PC-9 (cell line): ENCODE measurements at regions of chr15 and their contacts with region 1.

Region 1: GRCh38 chr15:50633653-50634052 is 52.9 kb downstream of the TRPM7 start:
- DNase-seq: no peak
- H3K4me3 ChIP-seq: no peak overlapping the region
- H3K27ac ChIP-seq: no peak overlapping the region
- H3K4me1 ChIP-seq: no peaks in the 10 kb centered on the region
- H3K27me3 ChIP-seq: no peaks in the 10 kb centered on the region
- CTCF ChIP-seq: no peak

Region 2: GRCh38 chr15:50576166-50576565 is 57.5 kb before region 1 on chr15:
- CTCF ChIA-PET with region 1: no interaction called
- POLR2A ChIA-PET with region 1: no interaction called
- intact Hi-C with region 1: loop called (anchors 10 kb)
- DNase-seq: no peak
- H3K4me3 ChIP-seq: no peak overlapping the region
- H3K27ac ChIP-seq: no peak overlapping the region
- H3K4me1 ChIP-seq: no peaks in the 10 kb centered on the region
- H3K27me3 ChIP-seq: no peaks in the 10 kb centered on the region
- CTCF ChIP-seq: no peak

Region 3: GRCh38 chr15:50675536-50676144 is 42.0 kb after region 1 on chr15:
- CTCF ChIA-PET with region 1: no interaction called
- POLR2A ChIA-PET with region 1: no interaction called
- intact Hi-C with region 1: no loop called
- DNase-seq: no peak
- H3K4me3 ChIP-seq: no peak overlapping the region
- H3K27ac ChIP-seq: no peak overlapping the region; the same call in 1 of the 2 replicates
- H3K4me1 ChIP-seq: no peaks in the 10 kb centered on the region
- H3K27me3 ChIP-seq: no peaks in the 10 kb centered on the region
- CTCF ChIP-seq: peak; percentile 84

Region 4: DNA sequence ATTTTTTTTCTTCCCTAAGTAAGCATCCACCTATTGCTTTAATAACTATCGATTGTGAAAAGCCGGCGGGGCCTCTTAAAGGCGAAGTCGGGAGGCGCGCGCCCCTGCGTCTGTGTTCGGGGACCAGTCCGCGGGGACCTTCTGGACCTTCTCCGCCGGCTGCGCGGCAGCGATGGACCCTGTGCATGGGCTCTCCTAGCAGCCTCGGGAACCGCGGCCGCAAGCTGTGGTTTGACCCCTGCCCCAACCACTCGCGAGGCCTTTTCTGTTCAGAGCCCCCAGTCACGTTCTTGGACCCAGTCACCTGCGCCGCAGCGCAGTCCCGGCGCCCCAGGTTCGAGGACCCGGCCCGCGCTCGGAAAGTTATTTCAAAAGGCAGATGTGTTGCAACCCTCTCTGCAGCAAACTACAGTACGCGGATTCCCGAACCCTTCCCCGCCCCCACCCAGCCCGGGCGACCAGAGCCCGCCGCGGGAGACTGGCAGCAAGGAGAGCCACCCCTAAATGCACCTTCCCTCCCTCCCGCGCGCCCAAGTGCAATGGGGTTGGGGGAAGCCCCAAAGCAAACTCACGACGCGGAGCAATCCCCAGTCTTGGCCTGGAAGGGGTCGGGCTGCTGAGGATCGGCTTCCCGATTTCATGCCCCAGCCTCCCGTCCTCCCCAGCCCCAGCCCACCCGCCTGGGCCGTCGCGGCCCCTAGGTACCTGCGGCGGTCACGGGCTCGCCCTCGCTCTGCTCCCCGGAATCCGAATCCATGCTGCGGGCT is 460.4 kb after region 1 on chr15:
- CTCF ChIA-PET with region 1: no interaction called
- POLR2A ChIA-PET with region 1: no interaction called
- intact Hi-C with region 1: no loop called
- DNase-seq: no peak
- H3K4me3 ChIP-seq: no peak overlapping the region
- H3K27ac ChIP-seq: no peak overlapping the region
- H3K4me1 ChIP-seq: no peaks in the 10 kb centered on the region
- H3K27me3 ChIP-seq: peaks cover 27% of the 10 kb centered on the region
- CTCF ChIP-seq: no peak